ENCODE measurements at regions of chr11 and their contacts with region 1.

Region 1: DNA sequence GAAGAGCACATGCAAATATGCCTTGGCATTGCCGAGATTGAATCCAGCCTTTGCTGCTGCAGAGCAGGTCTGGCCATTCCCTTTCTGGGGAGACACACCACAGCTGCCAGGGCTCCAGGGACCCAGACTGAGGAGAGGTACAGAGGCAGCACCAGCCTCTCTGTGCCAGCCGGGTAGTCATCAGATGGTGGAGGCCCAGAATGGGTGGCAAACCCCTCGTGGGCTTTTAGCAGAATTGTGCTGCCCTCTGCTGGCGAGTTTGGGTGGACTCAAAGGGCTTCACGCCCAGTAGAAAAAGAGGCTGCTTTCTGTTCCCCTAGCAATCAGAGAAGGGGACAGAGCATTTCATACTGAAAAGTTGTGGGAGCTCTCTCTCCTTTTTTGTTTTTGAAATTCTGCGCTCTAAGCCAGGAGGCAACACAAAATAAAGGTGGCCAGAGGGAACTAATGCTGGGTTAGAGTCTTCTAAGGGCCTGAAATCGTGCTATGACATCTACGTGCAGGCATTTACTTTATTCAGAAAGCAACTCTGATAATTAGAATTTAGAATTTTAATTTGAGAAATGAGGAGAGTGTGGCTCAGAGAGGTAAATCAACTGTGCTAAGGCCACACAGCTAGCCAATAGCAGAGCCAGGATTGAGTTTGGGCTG is 158.8 kb upstream of the NAV2 start:
- DNase-seq: peak; percentile 45 to 64
- ATAC-seq: peak; percentile 45 to 80
- H3K4me3 ChIP-seq: no peak overlapping the region
- H3K27ac ChIP-seq: no peak overlapping the region
- H3K4me1 ChIP-seq: no peaks in the 10 kb centered on the region
- H3K27me3 ChIP-seq: no peaks in the 10 kb centered on the region
- CTCF ChIP-seq: peak; percentile 61 to 87 (median 84)
- POLR2A ChIP-seq: no peak

Region 2: GRCh38 chr11:19071255-19071654 is 482.6 kb before region 1 on chr11:
- in situ Hi-C with region 1: loop called (anchors 5 to 10 kb)
- intact Hi-C with region 1: loop called (anchors 1 kb)
- DNase-seq: peak; percentile 16 to 39
- ATAC-seq: peak; percentile 92 to 95
- H3K4me3 ChIP-seq: peak overlapping the region in 3 of 4 donors; percentile 8 to 25 (median 9)
- H3K27ac ChIP-seq: no peak overlapping the region
- H3K4me1 ChIP-seq: no peaks in the 10 kb centered on the region
- H3K27me3 ChIP-seq: no peaks in the 10 kb centered on the region
- CTCF ChIP-seq: peak; percentile 70 to 92 (median 84)
- POLR2A ChIP-seq: no peak

Region 3: GRCh38 chr11:19160847-19161246 is 393.0 kb before region 1 on chr11:
- in situ Hi-C with region 1: no loop called
- intact Hi-C with region 1: loop called (anchors 5 kb)
- DNase-seq: no peak
- ATAC-seq: peak in 1 of 2 donors; percentile 61
- H3K4me3 ChIP-seq: no peak overlapping the region
- H3K27ac ChIP-seq: no peak overlapping the region
- H3K4me1 ChIP-seq: no peaks in the 10 kb centered on the region
- H3K27me3 ChIP-seq: no peaks in the 10 kb centered on the region
- CTCF ChIP-seq: peak in 2 of 5 experiments; percentile 4 to 29
- POLR2A ChIP-seq: no peak

Region 4: GRCh38 chr11:19259487-19260345 is 294.1 kb before region 1 on chr11:
- in situ Hi-C with region 1: no loop called
- intact Hi-C with region 1: loop called (anchors 2 kb)
- DNase-seq: peak; percentile 15 to 56
- ATAC-seq: peak; percentile 68 to 81
- H3K4me3 ChIP-seq: peak overlapping the region in 2 of 4 donors; percentile 17 to 26
- H3K27ac ChIP-seq: no peak overlapping the region
- H3K4me1 ChIP-seq: no peaks in the 10 kb centered on the region
- H3K27me3 ChIP-seq: no peaks in the 10 kb centered on the region
- CTCF ChIP-seq: peak; percentile 69 to 94 (median 75)
- POLR2A ChIP-seq: no peak

Region 5: GRCh38 chr11:19311308-19312030 is 242.3 kb before region 1 on chr11:
- in situ Hi-C with region 1: loop called (anchors 5 to 10 kb)
- intact Hi-C with region 1: loop called (anchors 1 kb)
- DNase-seq: peak in 1 of 2 donors; percentile 29
- ATAC-seq: peak; percentile 73 to 84
- H3K4me3 ChIP-seq: no peak overlapping the region
- H3K27ac ChIP-seq: no peak overlapping the region
- H3K4me1 ChIP-seq: peaks cover 0 to 3% of the 10 kb centered on the region in 2 donors
- H3K27me3 ChIP-seq: no peaks in the 10 kb centered on the region
- CTCF ChIP-seq: peak; percentile 26 to 76 (median 66)
- POLR2A ChIP-seq: no peak

Region 6: DNA sequence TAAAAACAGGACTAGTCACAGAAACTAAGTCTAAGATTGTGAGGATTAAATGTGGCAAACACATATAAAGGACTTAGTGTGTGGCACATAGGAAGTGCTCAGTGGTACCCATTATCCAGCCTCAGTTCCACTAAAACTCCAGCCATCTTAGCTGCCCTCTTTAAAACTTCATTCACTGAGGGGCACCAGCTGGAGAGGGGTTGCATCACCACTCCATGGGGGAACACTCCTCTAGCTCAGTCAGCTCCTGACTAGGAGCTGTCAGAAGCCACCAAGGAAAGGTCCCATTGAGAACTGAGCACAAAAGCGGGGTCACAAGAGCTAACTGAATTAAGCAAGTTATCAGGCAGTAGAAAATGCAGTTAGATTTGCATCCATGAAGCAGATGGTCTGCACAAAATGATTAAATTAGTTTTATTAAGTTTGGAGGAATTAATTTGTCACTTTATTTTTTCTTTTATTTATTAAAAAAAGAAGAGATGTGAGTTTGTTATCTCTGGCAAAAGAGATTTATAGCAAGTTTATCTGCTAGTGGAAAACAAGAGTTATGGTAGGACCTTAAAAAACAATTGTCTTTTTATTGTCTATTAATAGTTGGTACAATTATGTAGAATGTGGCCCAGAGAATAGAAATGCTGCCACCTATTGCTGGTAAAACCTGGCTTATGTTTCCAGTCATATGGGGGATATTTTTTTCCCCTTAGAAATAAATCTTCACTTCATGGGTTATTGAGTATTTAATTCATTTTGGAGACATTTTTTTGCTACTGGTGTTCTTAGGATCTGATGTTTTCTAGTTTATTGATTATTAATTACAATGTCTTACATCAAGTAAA is 254.5 kb after region 1 on chr11:
- in situ Hi-C with region 1: no loop called
- intact Hi-C with region 1: loop called (anchors 5 kb)
- DNase-seq: no peak
- ATAC-seq: no peak
- H3K4me3 ChIP-seq: no peak overlapping the region
- H3K27ac ChIP-seq: no peak overlapping the region
- H3K4me1 ChIP-seq: peaks cover 38% of the 10 kb centered on the region in 2 donors
- H3K27me3 ChIP-seq: no peaks in the 10 kb centered on the region
- CTCF ChIP-seq: no peak
- POLR2A ChIP-seq: no peak

Measured in gastrocnemius medialis (tissue), 4 donors.